Psoas muscle (tissue), 8 donors: ENCODE measurements at regions of chr3 and their contacts with region 1.

Region 1: DNA sequence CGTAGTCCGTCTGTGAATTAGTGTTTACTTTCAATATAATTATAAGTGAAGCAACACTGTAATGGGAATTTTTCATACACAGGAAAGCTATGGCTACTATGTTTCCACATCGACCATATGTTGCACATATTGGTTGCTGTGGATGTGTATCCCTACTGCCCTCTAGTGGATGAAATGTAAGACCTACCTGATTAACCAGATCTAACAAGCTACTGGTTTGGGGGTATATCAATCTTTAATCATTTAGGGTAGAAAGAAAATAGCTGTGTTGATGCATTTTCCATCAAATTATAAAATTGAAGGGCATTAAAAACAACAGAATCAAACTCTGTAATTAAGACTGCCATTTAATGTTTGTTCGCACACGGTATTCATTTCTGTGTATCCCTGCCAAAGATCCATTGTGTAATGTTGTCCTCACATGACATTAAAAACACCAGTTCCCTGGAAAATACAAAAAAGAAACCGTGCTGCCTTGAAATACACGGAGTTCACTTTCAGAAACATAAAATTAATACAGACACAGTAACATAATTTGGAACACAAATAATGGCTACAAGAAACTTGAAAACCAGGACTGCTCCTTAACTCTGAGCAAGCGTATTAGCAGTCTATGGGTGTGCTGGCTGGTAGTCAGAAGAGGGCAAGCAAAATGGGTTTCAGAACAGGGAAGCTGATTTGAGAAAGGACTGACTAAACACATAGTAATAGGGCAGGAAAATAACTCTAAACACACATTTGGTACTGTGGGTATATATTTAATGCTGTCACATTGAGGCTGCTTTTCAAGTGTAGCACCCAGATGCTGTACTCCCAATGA is 125.1 kb downstream of the TIGIT start:
- DNase-seq: no peak
- ATAC-seq: peak; percentile 73 to 87 (median 82)
- H3K4me3 ChIP-seq: peak overlapping the region; percentile 40
- H3K27ac ChIP-seq: no peak overlapping the region
- H3K4me1 ChIP-seq: peaks cover 63% of the 10 kb centered on the region
- H3K27me3 ChIP-seq: no peaks in the 10 kb centered on the region
- CTCF ChIP-seq: peak; percentile 86

Region 2: GRCh38 chr3:114383875-114384557 is 34.9 kb before region 1 on chr3:
- intact Hi-C with region 1: loop called in 1 of 2 experiments (anchors 2 kb)
- DNase-seq: peak; percentile 78 to 88
- ATAC-seq: peak; percentile 92 to 94 (median 94)
- H3K4me3 ChIP-seq: peak overlapping the region; percentile 56
- H3K27ac ChIP-seq: peak overlapping the region; percentile 51
- H3K4me1 ChIP-seq: peaks cover 46% of the 10 kb centered on the region
- H3K27me3 ChIP-seq: no peaks in the 10 kb centered on the region
- CTCF ChIP-seq: peak; percentile 94

Region 3: DNA sequence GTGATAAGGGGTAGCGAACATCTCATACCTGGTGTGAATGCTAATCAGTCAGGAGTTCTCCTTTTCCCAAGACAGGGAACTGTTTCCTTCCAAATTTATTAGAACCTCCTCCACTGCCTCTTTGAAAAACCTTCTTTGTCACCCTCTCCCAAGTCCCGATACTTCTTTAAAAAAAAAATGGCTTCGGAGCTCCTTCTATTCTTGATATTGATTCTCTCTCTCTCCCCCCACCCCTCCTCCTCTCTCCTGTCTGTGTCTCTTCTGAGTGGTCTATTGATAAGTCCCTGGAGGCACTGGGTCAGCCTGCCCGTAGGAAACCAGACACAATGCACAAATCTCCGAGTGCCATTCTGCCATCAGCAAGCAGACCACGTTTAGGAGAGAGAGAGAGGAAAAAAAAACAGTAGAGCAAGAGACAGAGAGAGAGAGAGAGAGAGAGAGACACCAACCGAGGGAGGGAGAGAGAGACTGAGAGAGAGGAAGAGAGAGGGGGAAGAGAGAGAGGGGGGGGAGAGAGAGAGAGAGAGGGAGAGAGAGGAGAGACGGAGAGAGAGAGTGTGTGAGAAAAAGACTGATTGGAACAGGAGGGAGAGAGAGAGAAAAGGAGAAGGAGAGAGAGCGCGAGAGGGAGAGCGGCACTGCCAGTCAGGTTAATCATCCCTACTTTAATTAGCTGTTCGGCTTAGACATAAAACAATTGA is 35.8 kb after region 1 on chr3:
- intact Hi-C with region 1: loop called in 1 of 2 experiments (anchors 5 kb)
- DNase-seq: no peak
- ATAC-seq: peak; percentile 36 to 72 (median 62)
- H3K4me3 ChIP-seq: peak overlapping the region; percentile 56
- H3K27ac ChIP-seq: peak overlapping the region; percentile 68
- H3K4me1 ChIP-seq: peaks cover 85% of the 10 kb centered on the region
- H3K27me3 ChIP-seq: no peaks in the 10 kb centered on the region
- CTCF ChIP-seq: no peak